ENCODE measurements at regions of chr1 and their contacts with region 1.

Region 1: GRCh38 chr1:116498789-116499628 is 71.8 kb downstream of the CD58 start:
- DNase-seq: peak; percentile 70
- ATAC-seq: peak; percentile 73
- H3K4me3 Mint-ChIP-seq: no peak overlapping the region
- H3K27ac Mint-ChIP-seq: no peak overlapping the region
- H3K4me1 Mint-ChIP-seq: peaks cover 44% of the 10 kb centered on the region
- H3K27me3 Mint-ChIP-seq: no peaks in the 10 kb centered on the region

Region 2: GRCh38 chr1:116151739-116152576 is 347.1 kb before region 1 on chr1:
- CTCF ChIA-PET with region 1: interaction called, 34 read pairs
- DNase-seq: peak; percentile 78
- ATAC-seq: peak; percentile 98
- H3K4me3 Mint-ChIP-seq: peak overlapping the region; percentile 32
- H3K27ac Mint-ChIP-seq: no peak overlapping the region
- H3K4me1 Mint-ChIP-seq: peaks cover 7% of the 10 kb centered on the region
- H3K27me3 Mint-ChIP-seq: peaks cover 14% of the 10 kb centered on the region

Region 3: GRCh38 chr1:116377541-116378529 is 121.2 kb before region 1 on chr1:
- CTCF ChIA-PET with region 1: interaction called, 10 read pairs
- DNase-seq: peak; percentile 67
- ATAC-seq: peak; percentile 66
- H3K4me3 Mint-ChIP-seq: peak overlapping the region; percentile 80
- H3K27ac Mint-ChIP-seq: peak overlapping the region; percentile 92
- H3K4me1 Mint-ChIP-seq: peaks cover 64% of the 10 kb centered on the region
- H3K27me3 Mint-ChIP-seq: no peaks in the 10 kb centered on the region

Region 4: DNA sequence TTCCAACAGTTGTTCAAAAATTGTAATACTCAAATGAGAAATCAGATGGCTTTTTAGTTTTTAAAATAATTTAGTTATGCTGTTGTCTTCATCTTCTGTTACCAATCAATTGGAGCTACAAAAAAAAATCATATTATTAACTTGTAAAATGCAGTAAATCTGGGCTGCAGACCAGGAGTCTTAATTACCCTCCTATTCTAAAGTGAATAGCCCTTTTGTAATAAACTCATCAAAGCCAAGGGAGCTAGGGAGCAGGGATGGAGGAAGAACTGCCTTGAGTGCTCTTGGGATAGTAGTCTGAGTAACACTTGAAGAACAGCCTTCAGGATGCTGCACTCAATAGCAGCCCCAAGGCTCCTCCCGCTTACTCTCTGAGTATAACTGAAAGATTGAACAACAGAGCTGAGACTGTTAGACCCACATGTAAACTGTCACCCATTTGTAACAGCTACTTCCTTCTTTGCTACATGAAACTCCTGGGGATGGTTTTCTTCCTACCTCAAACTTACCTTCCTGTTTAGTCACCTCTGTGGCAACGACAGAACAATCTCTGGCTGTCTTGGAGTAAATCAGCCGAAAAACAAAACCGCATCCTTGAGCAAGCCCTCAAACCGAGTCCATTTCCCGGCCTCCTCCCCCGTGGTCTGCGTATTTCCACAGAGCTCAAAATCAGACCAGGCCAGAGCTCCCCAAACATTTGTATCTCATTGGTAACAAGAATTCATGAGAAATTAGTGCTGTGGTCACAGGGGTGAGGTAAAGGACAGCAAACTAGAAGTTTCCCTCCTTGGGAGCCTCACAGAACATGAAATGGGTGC is 15.9 kb after region 1 on chr1:
- CTCF ChIA-PET with region 1: interaction called, 38 read pairs
- DNase-seq: peak; percentile 86
- ATAC-seq: peak; percentile 83
- H3K4me3 Mint-ChIP-seq: peak overlapping the region; percentile 39
- H3K27ac Mint-ChIP-seq: peak overlapping the region; percentile 93
- H3K4me1 Mint-ChIP-seq: peaks cover 77% of the 10 kb centered on the region
- H3K27me3 Mint-ChIP-seq: no peaks in the 10 kb centered on the region

Measured in activated CD8-positive, alpha-beta memory T cell treated with anti-CD3 and anti-CD28 coated beads, Interleukin-2, amount 10 ng/mL, durations not matched to agents 7 days and 5 days (primary cell).